ENCODE measurements at regions of chr12 and their contacts with region 1.

Region 1: GRCh38 chr12:56636675-56637540 is 6.8 kb upstream of the BAZ2A start:
- DNase-seq: peak; percentile 96
- ATAC-seq: peak; percentile 65
- H3K4me3 Mint-ChIP-seq: peak overlapping the region; percentile 82
- H3K27ac Mint-ChIP-seq: peak overlapping the region; percentile 87
- H3K4me1 Mint-ChIP-seq: peaks cover 55% of the 10 kb centered on the region
- H3K27me3 Mint-ChIP-seq: no peaks in the 10 kb centered on the region

Region 2: GRCh38 chr12:56034589-56035332 is 602.1 kb before region 1 on chr12:
- CTCF ChIA-PET with region 1: no interaction called
- DNase-seq: peak; percentile 76
- ATAC-seq: peak; percentile 64
- H3K4me3 Mint-ChIP-seq: no peak overlapping the region
- H3K27ac Mint-ChIP-seq: peak overlapping the region; percentile 59
- H3K4me1 Mint-ChIP-seq: peaks cover 59% of the 10 kb centered on the region
- H3K27me3 Mint-ChIP-seq: no peaks in the 10 kb centered on the region

Region 3: DNA sequence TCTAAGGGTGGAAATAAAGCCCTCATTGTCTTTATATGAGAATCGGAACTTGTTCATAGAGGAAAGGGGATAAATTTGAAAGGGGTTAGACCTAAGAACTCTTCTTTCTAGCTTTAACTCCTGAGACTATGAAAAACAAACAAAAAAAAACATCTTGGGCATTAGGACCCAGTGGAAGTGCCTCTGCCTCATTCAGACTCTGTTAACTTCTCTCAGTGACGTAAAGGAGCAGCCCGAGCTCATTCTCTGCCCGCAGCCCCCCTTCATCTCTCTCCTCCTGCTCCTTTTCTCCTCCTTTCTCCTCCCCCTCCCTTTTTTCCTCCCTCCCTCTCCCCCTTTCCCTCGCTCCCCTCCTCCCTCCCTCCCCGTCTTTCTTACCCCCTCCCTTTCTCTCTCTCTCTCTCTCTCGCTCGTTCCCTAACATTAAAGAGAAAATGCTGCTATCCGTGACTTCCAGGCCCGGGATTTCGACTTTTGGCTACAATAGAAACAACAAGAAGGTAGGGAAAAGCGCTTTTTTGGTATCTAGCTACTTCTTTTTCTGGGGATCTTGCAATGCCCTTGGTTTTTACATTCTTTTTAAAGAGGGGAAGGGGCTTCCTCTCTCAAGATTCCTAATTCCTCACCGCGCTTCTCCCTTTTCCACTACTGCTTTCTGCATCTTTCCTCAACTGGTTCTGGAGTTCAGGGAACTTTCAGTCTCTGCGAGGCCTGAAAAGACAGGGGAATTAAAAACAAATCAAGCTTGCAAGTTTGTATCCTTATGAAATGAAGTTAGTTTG is 115.1 kb before region 1 on chr12 and contains the start of gene RBMS2:
- CTCF ChIA-PET with region 1: interaction called, 10 read pairs
- DNase-seq: peak; percentile 71
- ATAC-seq: peak; percentile 93
- H3K4me3 Mint-ChIP-seq: peak within 1 kb of the TSS; percentile 77
- H3K27ac Mint-ChIP-seq: peak within 1 kb of the TSS; percentile 77
- H3K4me1 Mint-ChIP-seq: peaks cover 34% of the 10 kb centered on the region
- H3K27me3 Mint-ChIP-seq: no peaks in the 10 kb centered on the region
- total RNA-seq, gene RBMS2: 9.3 to 10.0 TPM

Region 4: DNA sequence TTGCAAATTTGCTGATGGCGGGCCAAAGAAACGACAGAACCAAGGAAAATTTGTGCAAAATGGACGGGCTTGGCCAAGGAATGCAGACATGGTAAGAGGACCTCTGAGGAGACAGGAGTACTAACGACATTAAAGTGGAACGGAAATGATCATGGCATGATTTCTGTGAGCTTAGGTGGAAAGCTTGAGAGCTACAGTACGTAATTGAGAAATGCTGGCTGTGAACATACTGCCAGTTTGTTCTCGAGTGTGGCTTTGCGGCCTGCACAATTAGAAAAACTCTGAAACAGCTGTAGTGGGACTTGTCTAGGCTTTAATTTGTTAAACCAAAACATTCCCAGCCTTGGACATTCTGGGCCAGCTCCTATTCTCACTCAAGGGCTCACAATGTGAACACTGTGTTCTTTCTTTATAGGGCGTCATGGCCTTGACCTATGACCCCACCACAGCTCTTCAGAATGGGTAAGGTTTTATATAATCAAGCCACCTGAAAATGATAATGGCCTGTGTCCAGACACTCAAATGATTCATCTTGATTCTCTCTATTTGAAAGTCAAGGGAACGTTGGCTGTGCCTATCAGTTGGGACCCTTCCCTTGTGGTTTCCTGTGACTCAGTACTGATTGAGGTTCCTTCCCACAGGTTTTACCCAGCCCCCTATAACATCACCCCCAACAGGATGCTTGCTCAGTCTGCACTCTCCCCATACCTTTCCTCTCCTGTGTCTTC is 55.3 kb before region 1 on chr12:
- CTCF ChIA-PET with region 1: interaction called, 11 read pairs
- DNase-seq: peak; percentile 81
- ATAC-seq: peak; percentile 93
- H3K4me3 Mint-ChIP-seq: no peak overlapping the region
- H3K27ac Mint-ChIP-seq: peak overlapping the region; percentile 84
- H3K4me1 Mint-ChIP-seq: peaks cover 31% of the 10 kb centered on the region
- H3K27me3 Mint-ChIP-seq: no peaks in the 10 kb centered on the region

Region 5: DNA sequence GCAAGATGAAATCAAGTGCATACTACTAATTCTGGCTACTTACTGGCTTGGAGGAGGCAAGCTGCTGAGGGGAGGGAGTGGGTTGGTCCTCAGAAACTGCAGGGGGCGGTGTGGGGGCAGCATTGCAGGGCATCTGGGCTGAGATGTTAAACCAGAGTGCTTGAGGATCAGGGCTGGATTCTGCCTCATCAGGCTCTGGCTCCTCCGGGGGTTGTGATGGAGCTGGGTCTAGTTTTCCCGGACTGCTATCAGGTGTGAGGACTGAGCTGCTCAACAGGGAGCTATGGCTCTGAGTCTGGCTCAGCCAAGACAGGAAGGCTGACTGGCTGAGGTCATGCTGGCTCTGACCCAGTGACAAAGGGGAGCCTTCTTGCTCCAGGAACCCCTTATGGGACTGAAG is 35.4 kb before region 1 on chr12:
- CTCF ChIA-PET with region 1: interaction called, 24 read pairs
- DNase-seq: peak; percentile 56
- ATAC-seq: peak; percentile 37
- H3K4me3 Mint-ChIP-seq: no peak overlapping the region
- H3K27ac Mint-ChIP-seq: no peak overlapping the region
- H3K4me1 Mint-ChIP-seq: no peaks in the 10 kb centered on the region
- H3K27me3 Mint-ChIP-seq: no peaks in the 10 kb centered on the region

Region 6: DNA sequence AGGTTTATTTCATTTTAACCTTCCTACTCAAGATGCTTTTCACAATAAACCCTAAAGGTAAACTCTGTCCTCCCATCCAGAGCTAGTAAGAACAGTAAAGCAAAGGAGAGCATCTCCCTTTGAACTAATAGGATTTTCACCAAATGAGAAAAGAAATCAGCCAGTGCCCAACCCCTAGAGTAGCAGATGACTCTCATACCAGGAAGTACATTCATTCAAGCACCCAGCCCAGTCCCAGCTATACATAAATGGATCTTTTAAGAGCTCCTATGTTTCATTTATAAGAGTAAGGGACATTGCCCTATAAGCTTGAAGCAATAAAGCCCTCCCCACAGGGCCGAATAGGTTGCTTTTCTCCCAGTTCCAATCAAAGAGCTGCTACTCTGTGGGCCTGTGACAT is 14.4 kb before region 1 on chr12:
- CTCF ChIA-PET with region 1: interaction called, 34 read pairs
- DNase-seq: no peak
- ATAC-seq: no peak
- H3K4me3 Mint-ChIP-seq: no peak overlapping the region
- H3K27ac Mint-ChIP-seq: no peak overlapping the region
- H3K4me1 Mint-ChIP-seq: peaks cover 46% of the 10 kb centered on the region
- H3K27me3 Mint-ChIP-seq: no peaks in the 10 kb centered on the region

Region 7: GRCh38 chr12:56684745-56685359 is 47.9 kb after region 1 on chr12:
- CTCF ChIA-PET with region 1: interaction called, 25 read pairs
- DNase-seq: no peak
- ATAC-seq: no peak
- H3K4me3 Mint-ChIP-seq: peak overlapping the region; percentile 94
- H3K27ac Mint-ChIP-seq: peak overlapping the region; percentile 100
- H3K4me1 Mint-ChIP-seq: peaks cover 44% of the 10 kb centered on the region
- H3K27me3 Mint-ChIP-seq: no peaks in the 10 kb centered on the region